ENCODE measurements at regions of chr4 and their contacts with region 1.

Region 1: DNA sequence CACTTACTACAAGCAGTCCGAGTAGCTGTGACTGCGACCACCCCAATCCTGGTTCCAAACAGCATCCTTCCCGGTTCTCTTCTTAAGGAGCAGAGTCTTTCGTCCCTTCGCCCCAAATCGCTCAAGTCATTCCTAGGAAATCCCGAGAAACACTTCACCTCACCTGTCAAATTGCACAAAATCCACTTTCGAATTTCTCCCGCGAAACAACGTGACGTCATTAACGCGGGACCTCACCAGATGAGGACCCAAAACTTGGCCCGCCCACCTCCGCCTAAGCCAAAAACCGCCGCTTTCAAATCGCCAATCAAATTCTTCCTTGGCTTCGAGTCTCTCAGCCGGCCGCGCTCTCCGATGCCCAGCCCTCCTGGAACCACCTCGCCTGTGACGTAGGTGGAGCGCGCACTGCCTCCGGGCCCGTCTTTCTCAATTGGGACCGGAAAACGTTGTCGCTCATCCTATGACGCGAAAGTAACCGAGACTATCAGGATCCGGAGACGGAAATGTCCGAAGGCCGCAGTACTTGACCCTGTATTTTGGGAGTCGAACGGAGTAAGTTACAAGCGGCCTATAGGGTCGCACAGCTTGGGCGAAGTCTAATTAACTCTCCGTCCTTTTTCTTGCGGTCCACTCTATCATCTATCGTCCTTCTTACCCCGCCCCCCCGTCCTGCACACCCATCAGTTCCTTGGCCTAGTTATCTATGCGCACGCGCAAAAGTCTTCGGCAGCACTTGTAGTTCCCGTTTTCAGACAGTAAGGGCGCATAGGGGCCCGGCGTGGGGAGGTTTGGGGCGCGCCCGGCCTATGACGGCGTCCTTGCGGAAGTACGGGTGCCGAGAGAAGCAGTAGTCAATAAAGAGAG is at the starts of genes LARP7 and ZGRF1:
- DNase-seq: peak; percentile 97 to 98
- ATAC-seq: peak; percentile 96 to 97
- H3K4me3 ChIP-seq: peak within 1 kb of the TSS; percentile 66 to 86 (median 72)
- H3K27ac ChIP-seq: peak within 1 kb of the TSS; percentile 87 to 93 (median 91)
- H3K4me1 ChIP-seq: peaks cover 34 to 41% of the 10 kb centered on the region in 2 donors
- H3K27me3 ChIP-seq: no peaks in the 10 kb centered on the region
- CTCF ChIP-seq: peak; percentile 92 to 100 (median 99)
- POLR2A ChIP-seq: peak; percentile 49 to 52
- total RNA-seq, gene LARP7: 28.5 to 40.3 (median 31.3) TPM
- total RNA-seq, gene ZGRF1: 0.55 to 2.9 (median 1.8) TPM

Region 2: DNA sequence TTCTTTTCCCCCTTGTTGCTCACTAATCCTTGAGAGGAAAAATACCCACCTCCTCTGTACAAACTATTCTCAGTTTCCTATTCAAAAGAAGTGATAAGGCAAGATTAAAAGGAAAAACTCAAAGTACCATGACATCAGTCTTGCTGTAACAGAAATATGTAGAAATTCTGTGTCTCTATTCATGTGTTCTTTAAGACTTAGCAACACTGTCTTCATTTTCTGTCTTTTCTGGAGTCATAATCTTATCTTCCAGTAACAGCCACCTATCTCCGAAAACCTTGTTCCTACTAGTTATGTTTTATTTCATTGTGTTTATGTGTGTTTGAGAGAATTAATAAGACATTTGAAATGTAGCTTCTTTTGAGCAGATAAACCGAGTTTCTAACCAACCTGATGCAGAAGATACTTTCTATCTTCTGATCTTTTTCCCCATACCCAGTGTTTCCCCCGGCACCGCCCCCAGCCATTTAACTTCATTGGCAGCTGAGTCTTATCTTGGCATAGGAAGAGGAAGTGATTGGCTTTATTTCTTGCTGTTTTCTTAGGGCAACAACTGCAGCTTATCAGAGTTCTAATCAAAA is 483.6 kb before region 1 on chr4:
- in situ Hi-C with region 1: no loop called
- intact Hi-C with region 1: no loop called
- DNase-seq: no peak
- ATAC-seq: no peak
- H3K4me3 ChIP-seq: no peak overlapping the region
- H3K27ac ChIP-seq: peak overlapping the region in 1 of 4 donors; percentile 5
- H3K4me1 ChIP-seq: peaks cover 10 to 12% of the 10 kb centered on the region in 2 donors
- H3K27me3 ChIP-seq: no peaks in the 10 kb centered on the region
- CTCF ChIP-seq: no peak
- POLR2A ChIP-seq: no peak

Region 3: DNA sequence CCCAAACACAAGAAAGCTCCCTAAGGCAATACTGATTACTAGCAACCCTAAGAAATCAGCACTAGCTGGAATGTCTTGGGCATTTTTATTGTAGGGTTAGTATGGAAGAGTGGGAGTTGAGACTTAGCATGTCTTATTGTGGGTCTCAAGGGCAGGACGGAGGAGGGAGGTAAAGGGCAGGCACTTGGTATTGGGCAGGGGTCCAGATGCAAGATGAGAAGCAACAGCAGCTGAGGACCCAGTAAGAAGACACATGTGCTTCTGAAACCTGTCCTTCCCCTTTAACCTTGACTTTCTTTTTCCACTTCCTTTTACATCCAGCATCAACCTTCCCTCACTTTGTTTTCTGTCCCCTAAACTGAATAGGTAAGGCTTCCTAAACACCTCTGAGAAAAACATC is 37.5 kb after region 1 on chr4:
- in situ Hi-C with region 1: no loop called
- intact Hi-C with region 1: loop called (anchors 5 kb)
- DNase-seq: peak in 1 of 2 donors; percentile 18
- ATAC-seq: no peak
- H3K4me3 ChIP-seq: no peak overlapping the region
- H3K27ac ChIP-seq: peak overlapping the region in 2 of 4 donors; percentile 83 to 92
- H3K4me1 ChIP-seq: peaks cover 24 to 26% of the 10 kb centered on the region in 2 donors
- H3K27me3 ChIP-seq: no peaks in the 10 kb centered on the region
- CTCF ChIP-seq: no peak
- POLR2A ChIP-seq: no peak

Region 4: GRCh38 chr4:112704991-112705845 is 68.3 kb after region 1 on chr4:
- in situ Hi-C with region 1: no loop called
- intact Hi-C with region 1: loop called (anchors 1 kb)
- DNase-seq: peak; percentile 16 to 38
- ATAC-seq: peak; percentile 73 to 76
- H3K4me3 ChIP-seq: peak overlapping the region; percentile 60 to 80 (median 73)
- H3K27ac ChIP-seq: peak overlapping the region; percentile 39 to 71 (median 67)
- H3K4me1 ChIP-seq: peaks cover 12 to 15% of the 10 kb centered on the region in 2 donors
- H3K27me3 ChIP-seq: no peaks in the 10 kb centered on the region
- CTCF ChIP-seq: no peak
- POLR2A ChIP-seq: no peak

Region 5: GRCh38 chr4:112714922-112715901 is 78.3 kb after region 1 on chr4:
- in situ Hi-C with region 1: no loop called
- intact Hi-C with region 1: loop called (anchors 2 kb)
- DNase-seq: peak in 1 of 2 donors; percentile 3
- ATAC-seq: peak; percentile 85 to 87
- H3K4me3 ChIP-seq: peak overlapping the region; percentile 18 to 26 (median 20)
- H3K27ac ChIP-seq: peak overlapping the region; percentile 65 to 75 (median 72)
- H3K4me1 ChIP-seq: peaks cover 18 to 19% of the 10 kb centered on the region in 2 donors
- H3K27me3 ChIP-seq: no peaks in the 10 kb centered on the region
- CTCF ChIP-seq: no peak
- POLR2A ChIP-seq: no peak

Region 6: GRCh38 chr4:112765317-112765975 is 128.5 kb after region 1 on chr4:
- in situ Hi-C with region 1: loop called in 3 of 4 experiments (anchors 5 kb)
- intact Hi-C with region 1: loop called (anchors 1 kb)
- DNase-seq: no peak
- ATAC-seq: peak; percentile 45 to 75
- H3K4me3 ChIP-seq: no peak overlapping the region
- H3K27ac ChIP-seq: no peak overlapping the region
- H3K4me1 ChIP-seq: no peaks in the 10 kb centered on the region
- H3K27me3 ChIP-seq: no peaks in the 10 kb centered on the region
- CTCF ChIP-seq: peak in 4 of 5 experiments; percentile 13 to 59 (median 46)
- POLR2A ChIP-seq: no peak

Region 7: DNA sequence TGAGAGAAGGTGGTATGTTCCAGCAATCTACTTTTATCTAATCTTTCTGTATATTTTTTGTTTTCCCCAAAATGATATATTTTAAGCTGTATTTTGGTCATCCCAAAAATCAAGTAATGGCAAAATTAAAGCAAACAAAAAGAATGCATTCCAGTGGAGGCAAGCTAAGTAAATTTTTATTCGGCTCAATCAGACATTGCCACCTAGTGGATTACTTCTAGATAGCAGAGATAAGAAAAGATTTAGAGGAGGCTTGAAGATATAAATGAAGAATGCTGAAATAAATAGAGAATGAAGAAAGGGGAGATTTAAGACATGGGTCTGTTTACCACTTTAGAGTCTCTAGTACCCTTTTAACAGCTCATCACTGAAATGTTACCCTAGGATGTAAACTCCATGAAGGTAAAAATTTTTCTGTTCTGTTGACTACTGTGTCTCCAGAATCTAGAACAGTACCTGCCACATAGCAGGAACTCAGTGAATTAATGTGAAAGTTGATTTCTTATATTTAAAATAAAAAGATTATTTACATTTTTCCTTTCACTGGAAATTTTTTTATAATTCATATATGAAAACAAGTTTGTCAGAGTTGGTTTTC is 301.6 kb after region 1 on chr4:
- in situ Hi-C with region 1: loop called (anchors 5 to 25 kb)
- intact Hi-C with region 1: loop called (anchors 2 kb)
- DNase-seq: no peak
- ATAC-seq: peak; percentile 36 to 53
- H3K4me3 ChIP-seq: no peak overlapping the region
- H3K27ac ChIP-seq: no peak overlapping the region
- H3K4me1 ChIP-seq: no peaks in the 10 kb centered on the region
- H3K27me3 ChIP-seq: no peaks in the 10 kb centered on the region
- CTCF ChIP-seq: peak; percentile 37 to 72 (median 64)
- POLR2A ChIP-seq: no peak

Measured in gastrocnemius medialis (tissue), 4 donors.